MCF 10A (cell line): ENCODE measurements at regions of chr6 and their contacts with region 1.

Region 1: DNA sequence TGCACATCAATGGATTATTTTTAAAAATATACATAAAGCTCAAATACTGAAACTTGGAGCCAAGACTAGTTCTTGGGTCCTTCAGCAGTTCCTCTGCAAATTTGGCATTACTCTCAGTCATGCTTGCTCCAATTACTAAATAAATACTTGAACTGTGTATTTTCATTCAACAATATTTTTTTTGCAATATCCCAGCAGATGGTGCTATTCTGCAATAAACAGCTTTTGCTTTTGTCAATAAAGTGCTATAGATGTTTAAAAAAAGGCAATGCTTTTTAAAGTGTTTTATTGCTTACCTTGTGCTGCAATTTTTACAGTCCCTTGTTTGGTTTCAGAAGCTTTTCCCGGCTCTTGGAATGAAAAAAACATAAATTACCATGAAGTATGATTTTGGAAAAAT is 243.4 kb downstream of the TRDN start:
- DNase-seq: peak; percentile 47
- H3K4me3 Mint-ChIP-seq: no peak overlapping the region
- H3K27ac Mint-ChIP-seq: no peak overlapping the region
- H3K4me1 Mint-ChIP-seq: no peaks in the 10 kb centered on the region
- H3K27me3 Mint-ChIP-seq: peaks cover 35% of the 10 kb centered on the region
- CTCF ChIP-seq: peak; percentile 42

Region 2: DNA sequence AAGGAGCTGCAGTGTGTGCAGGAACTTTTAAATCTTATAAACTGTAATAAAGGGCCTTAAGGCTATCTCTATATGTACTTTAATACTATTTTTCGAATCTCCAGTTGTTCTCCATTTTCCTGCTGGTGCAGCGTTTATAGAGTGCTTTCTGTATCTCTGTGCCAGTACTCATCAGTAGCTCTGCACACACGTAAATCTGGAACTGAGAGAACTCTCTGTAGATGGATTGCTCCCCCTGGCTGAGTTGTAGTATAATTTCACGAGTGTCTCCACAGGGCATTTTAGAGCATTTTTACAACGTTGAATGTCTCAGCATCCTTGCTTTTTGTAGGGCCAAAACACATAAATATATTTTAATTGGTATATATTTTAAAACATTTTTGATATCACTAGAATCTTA is 13.1 kb before region 1 on chr6:
- CTCF ChIA-PET with region 1: interaction called, 10 read pairs
- POLR2A ChIA-PET with region 1: no interaction called
- intact Hi-C with region 1: no loop called
- DNase-seq: peak; percentile 56
- H3K4me3 Mint-ChIP-seq: no peak overlapping the region
- H3K27ac Mint-ChIP-seq: no peak overlapping the region
- H3K4me1 Mint-ChIP-seq: no peaks in the 10 kb centered on the region
- H3K27me3 Mint-ChIP-seq: no peaks in the 10 kb centered on the region
- CTCF ChIP-seq: peak; percentile 34

Region 3: GRCh38 chr6:123434186-123434585 is 40.9 kb after region 1 on chr6:
- CTCF ChIA-PET with region 1: no interaction called
- POLR2A ChIA-PET with region 1: no interaction called
- intact Hi-C with region 1: no loop called
- DNase-seq: no peak
- H3K4me3 Mint-ChIP-seq: no peak overlapping the region
- H3K27ac Mint-ChIP-seq: no peak overlapping the region
- H3K4me1 Mint-ChIP-seq: no peaks in the 10 kb centered on the region
- H3K27me3 Mint-ChIP-seq: peaks cover 78% of the 10 kb centered on the region
- CTCF ChIP-seq: no peak

Region 4: DNA sequence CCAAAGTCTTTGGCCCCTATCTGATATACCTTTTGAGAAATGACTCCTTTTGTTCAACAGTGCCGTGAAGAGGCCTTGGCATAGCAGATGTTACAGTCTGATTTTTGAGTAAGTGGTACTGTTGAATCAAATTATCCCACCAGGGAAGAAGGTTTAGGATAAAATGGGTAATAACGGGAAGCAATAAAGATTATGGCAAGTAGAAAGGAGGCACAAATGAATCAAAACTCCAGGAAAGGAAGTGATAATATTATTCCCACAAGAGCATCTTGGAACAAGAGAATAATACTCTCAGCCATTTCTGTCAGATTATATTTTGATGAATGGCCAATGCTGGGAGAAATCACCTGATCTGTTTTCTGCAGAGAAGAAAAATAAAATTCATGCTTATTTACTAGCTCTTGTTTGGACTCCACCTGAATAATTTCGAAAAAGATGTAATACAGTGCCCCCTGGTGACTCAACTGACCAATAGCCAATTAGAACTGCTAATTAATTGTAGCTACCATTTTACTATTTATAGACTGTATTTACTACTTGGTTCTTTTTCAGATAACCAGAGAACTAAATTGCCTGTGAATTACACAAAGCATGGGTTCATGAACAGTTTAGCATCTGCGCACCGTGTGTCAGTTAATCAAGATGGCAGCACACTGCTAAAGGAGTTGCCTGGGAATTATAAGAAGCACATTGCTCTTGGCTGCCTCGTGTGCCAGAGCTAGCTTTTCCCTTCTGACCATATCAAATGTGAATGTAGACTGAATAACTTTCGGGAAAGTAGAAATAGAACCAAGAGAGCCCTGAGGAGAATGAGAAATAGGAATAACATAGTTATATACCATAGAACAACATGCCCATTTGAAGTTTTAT is 321.9 kb after region 1 on chr6:
- CTCF ChIA-PET with region 1: interaction called, 25 read pairs
- POLR2A ChIA-PET with region 1: interaction called, 3 read pairs
- intact Hi-C with region 1: loop called (anchors 5 kb)
- DNase-seq: peak; percentile 51
- H3K4me3 Mint-ChIP-seq: no peak overlapping the region
- H3K27ac Mint-ChIP-seq: no peak overlapping the region
- H3K4me1 Mint-ChIP-seq: no peaks in the 10 kb centered on the region
- H3K27me3 Mint-ChIP-seq: peaks cover 47% of the 10 kb centered on the region
- CTCF ChIP-seq: peak; percentile 61

Region 5: GRCh38 chr6:124854338-124854922 is 1461.1 kb after region 1 on chr6:
- CTCF ChIA-PET with region 1: no interaction called
- POLR2A ChIA-PET with region 1: no interaction called
- intact Hi-C with region 1: loop called (anchors 1 kb)
- DNase-seq: peak; percentile 11
- H3K4me3 Mint-ChIP-seq: no peak overlapping the region
- H3K27ac Mint-ChIP-seq: no peak overlapping the region
- H3K4me1 Mint-ChIP-seq: no peaks in the 10 kb centered on the region
- H3K27me3 Mint-ChIP-seq: no peaks in the 10 kb centered on the region
- CTCF ChIP-seq: peak; percentile 38